ENCODE measurements at regions of chr16 and their contacts with region 1.

Region 1: GRCh38 chr16:30922960-30923535 is 324 bp upstream of the FBXL19 start:
- DNase-seq: peak; percentile 86
- ATAC-seq: peak; percentile 68
- H3K4me3 Mint-ChIP-seq: peak overlapping the region; percentile 100
- H3K27ac Mint-ChIP-seq: peak overlapping the region; percentile 100
- H3K4me1 Mint-ChIP-seq: peaks cover 20% of the 10 kb centered on the region
- H3K27me3 Mint-ChIP-seq: no peaks in the 10 kb centered on the region
- CTCF ChIP-seq: no peak

Region 2: GRCh38 chr16:29983420-29984136 is 939.5 kb before region 1 on chr16:
- CTCF ChIA-PET with region 1: no interaction called
- POLR2A ChIA-PET with region 1: no interaction called
- intact Hi-C with region 1: no loop called
- DNase-seq: no peak
- ATAC-seq: no peak
- H3K4me3 Mint-ChIP-seq: no peak overlapping the region
- H3K27ac Mint-ChIP-seq: no peak overlapping the region
- H3K4me1 Mint-ChIP-seq: no peaks in the 10 kb centered on the region
- H3K27me3 Mint-ChIP-seq: no peaks in the 10 kb centered on the region
- CTCF ChIP-seq: no peak

Region 3: DNA sequence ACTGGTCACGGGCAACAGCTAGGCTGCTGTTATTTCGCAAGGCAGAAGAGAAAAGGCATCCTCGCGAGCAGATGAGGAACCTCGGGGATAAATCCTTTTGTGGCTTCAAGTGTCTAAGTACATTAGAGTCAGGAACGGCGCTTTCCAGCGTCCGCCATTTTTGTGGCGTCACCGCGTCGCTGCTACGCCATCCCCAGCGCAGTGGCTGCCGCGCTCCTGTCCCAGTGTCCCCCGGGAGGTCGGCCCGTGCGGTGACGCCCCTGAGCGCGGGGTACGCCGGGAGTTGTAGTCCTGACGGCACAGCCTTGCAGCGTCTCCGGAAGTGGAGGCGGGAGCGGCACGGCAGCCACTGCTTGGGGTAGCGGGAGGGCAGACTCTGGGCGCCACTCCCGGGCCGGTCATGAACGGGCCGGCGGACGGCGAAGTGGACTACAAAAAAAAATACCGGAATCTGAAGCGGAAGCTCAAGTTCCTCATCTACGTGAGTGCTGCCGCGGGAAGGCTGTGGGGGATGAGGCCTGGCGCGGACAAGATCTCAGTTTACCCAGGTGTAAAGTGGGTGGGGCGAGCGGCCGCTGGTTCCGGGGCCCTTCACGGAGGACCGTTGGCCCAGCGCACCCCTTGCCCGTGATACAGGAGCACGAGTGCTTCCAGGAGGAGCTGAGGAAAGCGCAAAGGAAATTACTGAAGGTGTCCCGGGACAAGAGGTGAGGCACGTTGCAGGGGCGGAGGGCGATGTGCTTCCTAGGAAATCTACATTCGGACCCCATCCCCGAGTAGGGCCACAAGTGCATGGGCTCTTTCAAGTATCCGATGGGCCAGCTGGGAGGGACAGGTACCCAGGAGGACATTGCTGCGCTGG is 926.9 kb before region 1 on chr16 and contains the start of gene INO80E:
- CTCF ChIA-PET with region 1: no interaction called
- POLR2A ChIA-PET with region 1: no interaction called
- intact Hi-C with region 1: loop called (anchors 2 kb)
- DNase-seq: peak; percentile 100
- ATAC-seq: peak; percentile 96
- H3K4me3 Mint-ChIP-seq: peak within 1 kb of the TSS; percentile 98
- H3K27ac Mint-ChIP-seq: peak within 1 kb of the TSS; percentile 97
- H3K4me1 Mint-ChIP-seq: peaks cover 29% of the 10 kb centered on the region
- H3K27me3 Mint-ChIP-seq: no peaks in the 10 kb centered on the region
- CTCF ChIP-seq: no peak
- total RNA-seq, gene INO80E: 83.5 and 93.6 TPM in 2 replicates

Region 4: DNA sequence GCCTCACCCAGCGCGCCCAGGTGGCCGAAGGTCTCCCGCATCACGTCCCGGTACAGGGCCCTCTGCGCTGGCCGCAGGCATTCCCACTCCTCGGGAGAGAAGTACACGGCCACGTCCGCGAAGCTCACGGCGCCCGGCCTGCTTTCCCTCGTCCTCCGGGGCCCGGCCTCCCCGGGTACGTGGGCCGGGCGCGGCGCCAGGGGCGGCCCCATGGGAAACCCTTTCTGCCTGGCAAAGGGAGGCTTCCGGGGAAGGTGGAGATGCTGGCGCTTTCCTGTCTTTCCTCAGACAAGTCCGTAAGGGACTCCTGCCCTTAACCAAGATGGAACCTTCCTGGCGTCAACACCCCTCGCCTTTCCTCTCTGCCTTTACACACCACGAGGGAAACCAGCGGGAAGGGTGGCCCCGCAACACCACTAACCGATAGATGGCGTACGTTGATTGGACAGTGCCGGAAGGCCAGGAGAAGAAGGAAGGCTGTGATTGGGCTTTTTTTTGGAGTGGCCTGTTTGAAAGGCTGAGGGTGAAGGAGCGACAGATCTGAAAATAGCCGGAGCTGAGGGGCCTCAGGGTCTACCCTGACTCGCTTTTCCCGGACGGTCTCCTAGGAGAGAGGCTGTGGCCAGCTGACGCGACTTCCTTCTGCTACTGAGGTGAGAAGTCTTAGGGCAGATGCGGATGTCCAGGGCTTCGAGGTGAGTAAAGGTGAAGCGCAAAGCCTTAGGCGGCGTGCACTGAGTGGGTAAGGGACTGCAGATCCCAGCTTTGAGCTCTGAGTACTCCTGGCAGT is 337.5 kb before region 1 on chr16 and contains the start of gene ZNF785:
- CTCF ChIA-PET with region 1: no interaction called
- POLR2A ChIA-PET with region 1: no interaction called
- intact Hi-C with region 1: loop called (anchors 1 kb)
- DNase-seq: peak; percentile 76
- ATAC-seq: peak; percentile 99
- H3K4me3 Mint-ChIP-seq: peak within 1 kb of the TSS; percentile 85
- H3K27ac Mint-ChIP-seq: peak within 1 kb of the TSS; percentile 79
- H3K4me1 Mint-ChIP-seq: peaks cover 19% of the 10 kb centered on the region
- H3K27me3 Mint-ChIP-seq: no peaks in the 10 kb centered on the region
- CTCF ChIP-seq: no peak
- total RNA-seq, gene ZNF785: 20.0 and 22.8 TPM in 2 replicates

Region 5: GRCh38 chr16:30715737-30716445 is 207.2 kb before region 1 on chr16:
- CTCF ChIA-PET with region 1: no interaction called
- POLR2A ChIA-PET with region 1: no interaction called
- intact Hi-C with region 1: loop called (anchors 1 kb)
- DNase-seq: no peak
- ATAC-seq: peak; percentile 99
- H3K4me3 Mint-ChIP-seq: peak overlapping the region; percentile 50
- H3K27ac Mint-ChIP-seq: peak overlapping the region; percentile 91
- H3K4me1 Mint-ChIP-seq: peaks cover 26% of the 10 kb centered on the region
- H3K27me3 Mint-ChIP-seq: no peaks in the 10 kb centered on the region
- CTCF ChIP-seq: no peak

Region 6: DNA sequence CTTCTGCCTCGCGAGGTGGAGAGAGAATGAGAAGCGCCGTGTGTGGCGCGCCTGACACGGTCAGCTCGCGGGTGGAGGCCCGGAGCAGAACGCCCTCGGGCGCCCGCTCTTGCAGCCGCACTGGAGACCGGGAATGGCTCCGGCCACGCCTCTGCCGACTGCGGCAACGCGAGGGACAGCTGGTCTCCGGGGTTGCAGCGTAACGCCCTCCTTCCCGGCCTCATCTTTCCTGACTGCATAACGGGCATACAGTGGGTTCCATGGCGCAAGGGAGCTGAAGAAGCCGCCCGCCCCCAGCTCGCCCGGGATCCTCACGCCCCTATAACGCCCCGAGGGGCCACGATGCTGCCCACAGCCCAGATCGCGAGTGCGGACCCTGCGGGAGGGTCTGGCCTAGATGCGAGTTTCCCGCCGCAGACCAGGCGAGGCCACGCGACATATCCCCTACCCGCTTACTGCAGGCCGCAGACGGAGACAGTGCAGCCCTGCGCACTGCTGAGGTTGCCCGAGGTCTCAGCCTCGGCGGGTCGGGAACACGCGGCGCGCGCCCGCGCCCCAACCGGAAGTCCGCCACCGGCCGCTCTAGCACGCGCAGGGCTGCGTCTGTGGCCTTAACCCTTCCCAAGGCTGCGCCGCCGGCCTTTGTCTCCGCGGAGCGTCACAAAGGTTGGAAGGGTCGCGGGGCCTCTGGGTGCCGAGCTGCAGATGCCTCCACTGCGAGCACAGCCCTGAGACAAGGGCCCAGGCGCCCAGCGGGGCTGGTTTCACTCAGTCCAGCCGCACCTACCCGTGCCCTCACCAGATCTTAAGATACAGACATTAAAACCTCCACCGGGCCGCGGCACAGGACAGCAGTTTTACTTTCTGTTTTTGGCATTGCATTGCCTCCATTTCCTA is 48.0 kb before region 1 on chr16:
- CTCF ChIA-PET with region 1: no interaction called
- POLR2A ChIA-PET with region 1: interaction called, 8 read pairs
- intact Hi-C with region 1: loop called (anchors 1 kb)
- DNase-seq: peak; percentile 90
- ATAC-seq: peak; percentile 83
- H3K4me3 Mint-ChIP-seq: peak overlapping the region; percentile 94
- H3K27ac Mint-ChIP-seq: peak overlapping the region; percentile 95
- H3K4me1 Mint-ChIP-seq: peaks cover 37% of the 10 kb centered on the region
- H3K27me3 Mint-ChIP-seq: no peaks in the 10 kb centered on the region
- CTCF ChIP-seq: no peak

Region 7: DNA sequence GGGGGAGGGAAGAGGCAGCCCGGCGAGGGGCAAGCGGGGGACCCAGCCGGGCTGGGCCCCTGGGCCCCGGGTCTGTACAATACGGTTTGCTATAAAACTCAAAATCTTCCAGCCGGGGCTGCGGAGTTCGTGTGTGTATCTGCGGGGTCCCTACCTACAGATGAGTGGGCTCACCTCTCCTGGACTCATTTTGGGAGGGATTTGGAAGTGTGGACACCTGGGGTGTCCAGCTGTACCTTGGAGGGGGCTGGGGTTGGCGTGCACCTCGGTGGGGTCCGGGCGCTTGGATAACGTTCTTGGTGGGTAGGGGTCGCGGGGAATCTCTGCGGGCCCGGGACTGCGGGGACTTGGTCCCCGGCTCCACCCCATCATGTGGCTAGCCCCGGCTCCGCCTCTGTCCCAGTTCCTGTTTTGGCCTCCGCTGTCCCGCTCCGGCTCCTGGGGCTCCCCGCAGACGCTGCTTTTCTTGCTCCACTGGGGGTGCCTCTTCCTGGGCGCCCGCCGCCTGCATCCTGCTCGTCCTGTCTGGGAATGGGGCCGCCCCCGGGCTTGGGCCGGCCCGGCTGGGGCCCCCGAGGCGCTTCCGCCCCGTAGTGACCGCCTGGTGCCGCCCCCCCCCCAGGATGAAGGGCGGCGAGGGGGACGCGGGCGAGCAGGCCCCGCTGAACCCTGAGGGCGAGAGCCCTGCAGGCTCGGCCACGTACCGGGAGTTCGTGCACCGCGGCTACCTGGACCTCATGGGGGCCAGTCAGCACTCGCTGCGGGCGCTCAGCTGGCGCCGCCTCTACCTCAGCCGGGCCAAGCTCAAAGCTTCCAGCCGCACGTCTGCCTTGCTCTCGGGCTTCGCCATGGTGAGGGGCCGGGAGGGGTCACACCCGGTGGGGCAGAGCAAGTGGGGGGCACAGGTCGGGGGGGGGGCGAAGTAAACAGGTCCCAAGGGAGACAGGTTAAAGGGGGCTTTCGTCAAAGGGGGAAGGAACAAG is 25.9 kb after region 1 on chr16 and contains the start of gene ORAI3:
- CTCF ChIA-PET with region 1: no interaction called
- POLR2A ChIA-PET with region 1: no interaction called
- intact Hi-C with region 1: loop called (anchors 1 kb)
- DNase-seq: peak; percentile 73
- ATAC-seq: peak; percentile 82
- H3K4me3 Mint-ChIP-seq: peak within 1 kb of the TSS; percentile 92
- H3K27ac Mint-ChIP-seq: peak within 1 kb of the TSS; percentile 86
- H3K4me1 Mint-ChIP-seq: peaks cover 27% of the 10 kb centered on the region
- H3K27me3 Mint-ChIP-seq: no peaks in the 10 kb centered on the region
- CTCF ChIP-seq: no peak
- total RNA-seq, gene ORAI3: 25.1 and 30.6 TPM in 2 replicates

Region 8: DNA sequence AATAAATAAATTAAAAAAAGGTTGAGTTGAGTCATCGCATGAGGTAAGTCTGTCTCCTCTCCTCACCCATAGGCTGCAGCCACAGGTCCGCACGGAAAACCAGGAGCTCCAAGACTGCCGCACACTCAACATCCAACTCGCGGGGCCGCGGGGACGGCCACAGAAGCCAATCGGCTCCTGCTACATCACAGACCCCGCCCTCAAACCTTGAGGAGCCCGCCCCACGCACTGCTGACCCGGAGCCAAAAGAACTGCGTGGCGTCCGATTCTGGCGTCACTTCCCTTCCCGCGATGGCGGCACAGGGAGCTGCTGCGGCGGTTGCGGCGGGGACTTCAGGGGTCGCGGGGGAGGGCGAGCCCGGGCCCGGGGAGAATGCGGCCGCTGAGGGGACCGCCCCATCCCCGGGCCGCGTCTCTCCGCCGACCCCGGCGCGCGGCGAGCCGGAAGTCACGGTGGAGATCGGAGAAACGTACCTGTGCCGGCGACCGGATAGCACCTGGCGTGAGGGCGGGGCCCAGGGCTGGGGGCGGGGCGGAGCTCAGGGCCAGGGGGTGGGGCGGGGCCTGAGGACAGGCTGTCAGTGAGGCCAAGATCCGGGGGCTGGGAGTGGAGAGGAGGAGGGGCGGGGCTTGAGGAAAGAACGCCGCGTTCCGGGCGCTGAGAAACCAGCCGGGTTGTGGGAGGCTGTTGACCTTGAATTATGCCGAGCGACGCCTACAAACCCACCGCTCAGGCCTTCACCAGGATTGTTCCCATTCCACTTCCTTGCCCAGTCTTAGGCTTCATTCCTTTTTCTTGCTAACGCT is 194.5 kb after region 1 on chr16 and contains the start of gene KAT8:
- CTCF ChIA-PET with region 1: no interaction called
- POLR2A ChIA-PET with region 1: no interaction called
- intact Hi-C with region 1: loop called (anchors 1 kb)
- DNase-seq: peak; percentile 92
- ATAC-seq: peak; percentile 94
- H3K4me3 Mint-ChIP-seq: peak within 1 kb of the TSS; percentile 85
- H3K27ac Mint-ChIP-seq: peak within 1 kb of the TSS; percentile 85
- H3K4me1 Mint-ChIP-seq: peaks cover 22% of the 10 kb centered on the region
- H3K27me3 Mint-ChIP-seq: no peaks in the 10 kb centered on the region
- CTCF ChIP-seq: no peak
- total RNA-seq, gene KAT8: 82.1 and 93.7 TPM in 2 replicates

Region 9: GRCh38 chr16:31253642-31254045 is 330.6 kb after region 1 on chr16:
- CTCF ChIA-PET with region 1: no interaction called
- POLR2A ChIA-PET with region 1: no interaction called
- intact Hi-C with region 1: no loop called
- DNase-seq: no peak
- ATAC-seq: peak; percentile 28
- H3K4me3 Mint-ChIP-seq: no peak overlapping the region
- H3K27ac Mint-ChIP-seq: peak overlapping the region; percentile 13
- H3K4me1 Mint-ChIP-seq: peaks cover 16% of the 10 kb centered on the region
- H3K27me3 Mint-ChIP-seq: no peaks in the 10 kb centered on the region
- CTCF ChIP-seq: no peak